ENCODE measurements at regions of chr12 and their contacts with region 1.

Region 1: DNA sequence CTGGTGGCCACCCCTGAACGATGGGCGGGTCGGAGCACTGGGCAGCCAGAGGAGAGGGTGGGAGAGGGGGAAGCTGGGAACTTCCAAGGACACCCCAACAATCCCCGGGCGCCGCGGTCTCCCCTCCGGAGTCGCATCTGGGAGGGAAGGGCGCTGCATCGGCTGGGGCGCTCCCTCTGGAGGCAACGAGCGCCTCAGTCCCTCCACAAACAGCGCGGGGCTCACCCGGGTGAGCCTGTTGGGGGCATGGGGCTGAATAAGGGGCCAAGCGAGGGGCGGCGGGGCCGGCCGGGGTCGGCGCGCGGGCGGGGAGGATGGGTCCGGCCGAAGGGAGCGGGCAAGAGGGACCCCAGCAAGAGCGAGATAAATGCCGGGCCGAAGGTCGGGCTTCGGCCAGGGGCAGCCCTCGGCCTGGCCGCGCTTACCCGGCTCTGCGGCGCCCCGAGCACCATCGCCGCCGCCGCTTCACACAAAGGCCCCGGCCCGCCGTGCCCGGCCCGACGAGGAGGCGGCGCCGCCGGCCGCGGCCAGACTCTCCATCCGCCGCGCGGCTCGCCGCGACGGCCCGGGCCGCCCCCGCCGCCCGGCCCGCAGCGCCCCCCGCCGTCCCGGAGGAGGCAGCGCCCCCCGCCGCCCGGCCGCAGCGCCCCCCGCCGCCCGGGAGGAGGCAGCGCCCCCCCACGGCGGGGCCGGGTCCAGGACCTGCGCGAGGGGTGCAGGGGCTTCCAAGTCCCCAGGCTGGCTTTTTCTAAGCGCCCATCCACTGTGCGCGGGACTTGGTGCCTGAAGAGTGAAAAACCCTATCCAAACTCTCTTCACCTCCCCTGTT is at the start of gene ZBTB39:
- DNase-seq: peak; percentile 92
- H3K4me3 Mint-ChIP-seq: peak within 1 kb of the TSS; percentile 93
- H3K27ac Mint-ChIP-seq: peak within 1 kb of the TSS; percentile 86
- H3K4me1 Mint-ChIP-seq: peaks cover 44% of the 10 kb centered on the region
- H3K27me3 Mint-ChIP-seq: no peaks in the 10 kb centered on the region
- total RNA-seq, gene ZBTB39: 11.0 TPM in 2 replicates

Region 2: GRCh38 chr12:57476162-57476992 is 470.2 kb after region 1 on chr12:
- intact Hi-C with region 1: loop called (anchors 5 kb)
- DNase-seq: peak; percentile 93
- H3K4me3 Mint-ChIP-seq: peak overlapping the region; percentile 96
- H3K27ac Mint-ChIP-seq: peak overlapping the region; percentile 97
- H3K4me1 Mint-ChIP-seq: peaks cover 68% of the 10 kb centered on the region
- H3K27me3 Mint-ChIP-seq: no peaks in the 10 kb centered on the region